ENCODE measurements at regions of chr13 and their contacts with region 1.

Region 1: DNA sequence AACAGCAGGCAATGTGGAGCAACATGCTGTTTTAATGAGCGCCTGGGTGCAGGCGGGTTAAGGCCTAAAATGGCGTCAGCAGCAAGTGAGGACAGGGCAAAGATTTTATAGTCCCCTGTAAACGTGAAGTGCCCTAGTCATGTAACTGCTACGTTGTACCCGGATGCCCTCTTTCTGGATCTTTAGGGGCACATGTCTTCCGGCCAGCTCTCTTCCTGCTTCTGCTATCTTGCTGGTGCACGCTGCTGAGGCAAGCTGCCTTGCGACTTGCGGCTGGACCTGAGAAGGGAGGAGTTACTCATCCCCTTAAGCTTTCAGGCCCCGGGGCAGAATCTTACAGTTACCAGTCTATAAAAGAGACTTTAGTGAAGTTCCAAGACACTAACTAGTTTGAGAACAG is 303.6 kb upstream of the DACH1 start:
- DNase-seq: no peak
- ATAC-seq: no peak
- H3K4me3 ChIP-seq: no peak overlapping the region
- H3K4me3 Mint-ChIP-seq: no peak overlapping the region
- H3K27ac ChIP-seq: no peak overlapping the region
- H3K27ac Mint-ChIP-seq: no peak overlapping the region
- H3K4me1 ChIP-seq: no peaks in the 10 kb centered on the region
- H3K4me1 Mint-ChIP-seq: no peaks in the 10 kb centered on the region
- H3K27me3 ChIP-seq: no peaks in the 10 kb centered on the region
- H3K27me3 Mint-ChIP-seq: no peaks in the 10 kb centered on the region
- CTCF ChIP-seq: no peak

Region 2: GRCh38 chr13:72132065-72132464 is 38.5 kb before region 1 on chr13:
- CTCF ChIA-PET with region 1: no interaction called
- POLR2A ChIA-PET with region 1: no interaction called
- intact Hi-C with region 1: no loop called
- DNase-seq: no peak
- ATAC-seq: no peak
- H3K4me3 ChIP-seq: no peak overlapping the region
- H3K4me3 Mint-ChIP-seq: no peak overlapping the region
- H3K27ac ChIP-seq: no peak overlapping the region
- H3K27ac Mint-ChIP-seq: no peak overlapping the region
- H3K4me1 ChIP-seq: no peaks in the 10 kb centered on the region
- H3K4me1 Mint-ChIP-seq: no peaks in the 10 kb centered on the region
- H3K27me3 ChIP-seq: no peaks in the 10 kb centered on the region
- H3K27me3 Mint-ChIP-seq: no peaks in the 10 kb centered on the region
- CTCF ChIP-seq: no peak

Region 3: GRCh38 chr13:73579574-73580274 is 1409.2 kb after region 1 on chr13:
- CTCF ChIA-PET with region 1: no interaction called
- POLR2A ChIA-PET with region 1: no interaction called
- intact Hi-C with region 1: loop called in 1 of 2 experiments (anchors 10 kb)
- DNase-seq: no peak
- ATAC-seq: no peak
- H3K4me3 ChIP-seq: no peak overlapping the region
- H3K4me3 Mint-ChIP-seq: no peak overlapping the region
- H3K27ac ChIP-seq: no peak overlapping the region
- H3K27ac Mint-ChIP-seq: no peak overlapping the region
- H3K4me1 ChIP-seq: no peaks in the 10 kb centered on the region
- H3K4me1 Mint-ChIP-seq: no peaks in the 10 kb centered on the region
- H3K27me3 ChIP-seq: no peaks in the 10 kb centered on the region
- H3K27me3 Mint-ChIP-seq: no peaks in the 10 kb centered on the region
- CTCF ChIP-seq: no peak

Measured in CD4-positive, alpha-beta T cell (primary cell).